ENCODE measurements at regions of chr15 and their contacts with region 1.

Region 1: DNA sequence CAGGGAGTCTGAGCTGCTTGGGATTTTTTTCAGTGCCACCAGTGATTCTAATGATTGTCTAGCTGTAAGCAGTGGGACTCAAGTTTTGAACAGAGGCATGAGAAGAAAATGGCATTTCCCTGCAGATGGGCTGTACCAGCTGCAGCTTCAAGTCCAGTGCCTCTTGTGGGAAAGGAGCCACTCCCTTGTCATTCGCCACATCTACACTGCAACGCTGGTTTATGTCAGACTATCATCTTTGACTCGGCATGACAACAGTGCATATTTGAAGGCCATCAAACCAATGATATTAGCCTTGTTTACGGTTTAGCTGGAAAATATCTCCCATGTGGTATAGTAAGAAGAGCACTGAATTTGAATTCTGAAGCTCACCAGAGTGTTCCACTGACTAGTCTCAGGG is 22.2 kb downstream of the SCG5 start:
- DNase-seq: no peak
- H3K4me3 ChIP-seq: no peak overlapping the region
- H3K4me3 Mint-ChIP-seq: no peak overlapping the region
- H3K27ac Mint-ChIP-seq: no peak overlapping the region
- H3K4me1 ChIP-seq: no peaks in the 10 kb centered on the region
- H3K4me1 Mint-ChIP-seq: no peaks in the 10 kb centered on the region
- H3K27me3 ChIP-seq: no peaks in the 10 kb centered on the region
- H3K27me3 Mint-ChIP-seq: no peaks in the 10 kb centered on the region
- CTCF ChIP-seq: no peak

Region 2: GRCh38 chr15:32706704-32707103 is 43.0 kb after region 1 on chr15:
- CTCF ChIA-PET with region 1: no interaction called
- POLR2A ChIA-PET with region 1: no interaction called
- intact Hi-C with region 1: no loop called
- DNase-seq: peak in 1 of 2 experiments; percentile 53
- H3K4me3 ChIP-seq: no peak overlapping the region
- H3K4me3 Mint-ChIP-seq: no peak overlapping the region
- H3K27ac Mint-ChIP-seq: peak overlapping the region; percentile 52
- H3K4me1 ChIP-seq: peaks cover 22% of the 10 kb centered on the region
- H3K4me1 Mint-ChIP-seq: peaks cover 16% of the 10 kb centered on the region
- H3K27me3 ChIP-seq: no peaks in the 10 kb centered on the region
- H3K27me3 Mint-ChIP-seq: no peaks in the 10 kb centered on the region
- CTCF ChIP-seq: no peak

Region 3: GRCh38 chr15:32936283-32936918 is 272.7 kb after region 1 on chr15:
- CTCF ChIA-PET with region 1: interaction called, 33 read pairs
- POLR2A ChIA-PET with region 1: no interaction called
- intact Hi-C with region 1: loop called (anchors 1 kb)
- DNase-seq: peak in 1 of 2 experiments; percentile 24
- H3K4me3 ChIP-seq: no peak overlapping the region
- H3K4me3 Mint-ChIP-seq: no peak overlapping the region
- H3K27ac Mint-ChIP-seq: no peak overlapping the region
- H3K4me1 ChIP-seq: no peaks in the 10 kb centered on the region
- H3K4me1 Mint-ChIP-seq: no peaks in the 10 kb centered on the region
- H3K27me3 ChIP-seq: no peaks in the 10 kb centered on the region; the same call in 1 of the 2 replicates
- H3K27me3 Mint-ChIP-seq: peaks cover 7% of the 10 kb centered on the region
- CTCF ChIP-seq: peak; percentile 53 to 58

Region 4: GRCh38 chr15:32956006-32956405 is 292.3 kb after region 1 on chr15:
- CTCF ChIA-PET with region 1: interaction called, 11 read pairs
- POLR2A ChIA-PET with region 1: no interaction called
- intact Hi-C with region 1: loop called (anchors 1 kb)
- DNase-seq: peak in 1 of 2 experiments; percentile 33
- H3K4me3 ChIP-seq: no peak overlapping the region
- H3K4me3 Mint-ChIP-seq: no peak overlapping the region
- H3K27ac Mint-ChIP-seq: no peak overlapping the region
- H3K4me1 ChIP-seq: no peaks in the 10 kb centered on the region
- H3K4me1 Mint-ChIP-seq: no peaks in the 10 kb centered on the region
- H3K27me3 ChIP-seq: no peaks in the 10 kb centered on the region
- H3K27me3 Mint-ChIP-seq: peaks cover 2% of the 10 kb centered on the region
- CTCF ChIP-seq: peak; percentile 22 to 58